PC-9 (cell line): ENCODE measurements at regions of chr5 and their contacts with region 1.

Region 1: DNA sequence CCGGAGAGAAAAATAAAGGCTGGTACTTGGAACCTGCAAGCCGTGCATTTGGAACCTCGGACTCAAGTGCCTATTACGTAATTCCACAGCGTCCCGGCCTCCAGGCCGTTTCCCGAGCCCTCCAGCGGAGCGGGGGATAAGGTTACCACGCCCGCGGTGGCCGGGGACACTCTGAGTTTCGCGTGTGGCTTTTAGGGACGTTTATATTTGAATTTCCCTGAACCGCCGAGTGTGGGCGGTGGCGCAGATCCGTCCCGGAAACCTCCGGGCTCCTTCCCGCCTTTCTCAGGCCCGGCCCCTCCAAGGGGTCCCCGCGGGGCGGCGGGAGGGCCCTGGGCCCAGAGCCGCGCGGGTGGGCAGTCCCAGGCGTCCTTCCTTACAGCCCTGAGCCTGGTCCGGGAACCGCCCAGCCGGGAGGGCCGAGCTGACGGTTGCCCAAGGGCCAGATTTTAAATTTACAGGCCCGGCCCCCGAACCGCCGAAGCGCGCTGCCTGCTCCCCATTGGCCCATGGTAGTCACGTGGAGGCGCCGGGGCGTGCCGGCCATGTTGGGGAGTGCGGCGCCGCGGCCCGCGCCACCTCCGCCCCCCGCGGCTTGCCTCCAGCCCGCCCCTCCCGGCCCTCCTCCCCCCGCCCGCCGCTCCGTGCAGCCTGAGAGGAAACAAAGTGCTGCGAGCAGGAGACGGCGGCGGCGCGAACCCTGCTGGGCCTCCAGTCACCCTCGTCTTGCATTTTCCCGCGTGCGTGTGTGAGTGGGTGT is at the start of gene LMNB1:
- DNase-seq: peak; percentile 88 to 97
- H3K4me3 ChIP-seq: peak within 1 kb of the TSS; percentile 83
- H3K27ac ChIP-seq: peak within 1 kb of the TSS; percentile 60
- H3K4me1 ChIP-seq: peaks cover 25% of the 10 kb centered on the region
- H3K27me3 ChIP-seq: no peaks in the 10 kb centered on the region
- CTCF ChIP-seq: no peak
- total RNA-seq, gene LMNB1: 103 and 117 TPM in 2 replicates

Region 2: DNA sequence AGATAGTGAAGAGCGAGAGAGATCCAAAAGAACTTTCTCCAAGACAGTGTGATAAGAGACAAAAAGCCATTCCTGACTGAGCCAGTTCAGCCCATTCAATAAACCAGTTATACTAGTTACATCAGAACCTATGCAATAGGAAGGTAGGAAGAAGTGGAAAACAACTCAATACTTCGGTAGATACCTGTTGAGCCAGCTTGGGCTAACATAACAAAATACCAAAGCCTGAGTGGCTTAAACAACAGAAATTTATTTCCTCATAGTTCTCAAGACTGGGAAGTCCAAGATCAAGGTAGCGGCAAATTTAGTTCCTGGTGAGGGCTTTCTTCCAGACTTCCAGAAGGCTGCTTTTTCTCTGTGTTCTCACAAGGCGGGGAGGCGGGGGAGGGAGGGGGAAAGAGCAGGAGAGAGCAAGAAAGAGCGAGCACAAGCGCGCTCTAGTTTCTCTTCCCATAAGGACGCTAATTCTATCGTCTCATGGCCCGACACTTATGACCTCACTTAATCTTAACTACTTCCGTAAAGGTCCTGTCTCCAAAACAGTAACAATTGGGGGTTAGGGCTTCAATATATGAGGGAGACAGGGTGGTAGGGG is 567.9 kb before region 1 on chr5:
- CTCF ChIA-PET with region 1: no interaction called
- POLR2A ChIA-PET with region 1: no interaction called
- intact Hi-C with region 1: no loop called
- DNase-seq: peak in 1 of 2 experiments; percentile 34
- H3K4me3 ChIP-seq: no peak overlapping the region
- H3K27ac ChIP-seq: no peak overlapping the region
- H3K4me1 ChIP-seq: no peaks in the 10 kb centered on the region
- H3K27me3 ChIP-seq: no peaks in the 10 kb centered on the region
- CTCF ChIP-seq: no peak

Region 3: GRCh38 chr5:126600631-126601511 is 175.8 kb before region 1 on chr5 and contains the start of gene PHAX:
- CTCF ChIA-PET with region 1: no interaction called
- POLR2A ChIA-PET with region 1: interaction called, 12 read pairs
- intact Hi-C with region 1: loop called (anchors 10 kb)
- DNase-seq: peak; percentile 52 to 75
- H3K4me3 ChIP-seq: peak within 1 kb of the TSS; percentile 98
- H3K27ac ChIP-seq: peak within 1 kb of the TSS; percentile 41; the same call in 1 of the 2 replicates
- H3K4me1 ChIP-seq: peaks cover 10% of the 10 kb centered on the region
- H3K27me3 ChIP-seq: no peaks in the 10 kb centered on the region
- CTCF ChIP-seq: peak; percentile 54
- total RNA-seq, gene PHAX: 21.5 and 30.6 TPM in 2 replicates

Region 4: DNA sequence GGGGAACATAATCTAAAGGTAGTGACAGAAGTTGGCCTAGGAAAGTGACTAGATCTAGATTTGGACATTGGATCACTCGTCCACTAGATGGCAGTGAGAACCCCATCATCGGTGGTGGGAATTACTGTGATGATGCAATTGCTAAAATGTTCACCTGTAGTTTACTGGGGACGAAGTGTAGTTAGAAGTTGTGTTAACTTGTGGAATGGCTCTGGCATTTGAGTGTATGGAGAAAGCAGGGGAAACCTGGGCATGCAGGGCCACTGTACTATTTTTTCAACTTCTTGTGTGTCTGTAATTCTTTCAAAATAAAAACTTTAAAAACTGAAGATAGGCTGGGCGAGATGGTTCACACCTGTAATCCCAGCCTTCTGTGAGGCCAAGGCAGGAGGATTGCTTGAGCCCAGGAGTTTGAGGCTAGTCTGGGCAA is 100.5 kb before region 1 on chr5:
- CTCF ChIA-PET with region 1: interaction called, 10 read pairs
- POLR2A ChIA-PET with region 1: interaction called, 4 read pairs
- intact Hi-C with region 1: loop called (anchors 1 kb)
- DNase-seq: peak; percentile 45 to 46
- H3K4me3 ChIP-seq: no peak overlapping the region
- H3K27ac ChIP-seq: no peak overlapping the region
- H3K4me1 ChIP-seq: no peaks in the 10 kb centered on the region
- H3K27me3 ChIP-seq: no peaks in the 10 kb centered on the region
- CTCF ChIP-seq: peak; percentile 87

Region 5: DNA sequence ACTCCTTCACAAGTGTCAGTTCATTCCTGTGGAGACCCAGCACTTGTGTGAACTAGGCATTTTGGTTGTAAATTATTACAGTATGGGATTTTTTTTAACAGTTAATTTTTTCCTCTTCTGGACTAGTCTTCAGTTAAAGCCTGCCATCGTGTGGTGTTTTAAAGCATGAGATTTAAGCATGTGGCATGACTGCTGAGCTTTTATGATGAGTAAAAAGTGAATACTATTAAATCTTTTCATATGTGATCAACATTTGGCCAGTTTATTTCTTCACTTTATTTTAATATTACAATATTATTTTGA is 25.3 kb after region 1 on chr5:
- CTCF ChIA-PET with region 1: interaction called, 11 read pairs
- POLR2A ChIA-PET with region 1: no interaction called
- intact Hi-C with region 1: no loop called
- DNase-seq: no peak
- H3K4me3 ChIP-seq: no peak overlapping the region
- H3K27ac ChIP-seq: no peak overlapping the region
- H3K4me1 ChIP-seq: no peaks in the 10 kb centered on the region
- H3K27me3 ChIP-seq: no peaks in the 10 kb centered on the region
- CTCF ChIP-seq: peak; percentile 43